Common myeloid progenitor, CD34-positive (primary cell): ENCODE measurements at regions of chr20 and their contacts with region 1.

Region 1: GRCh38 chr20:24781422-24781980 is 167.6 kb upstream of the CST7 start:
- DNase-seq: peak in 1 of 3 donors; percentile 44
- H3K4me3 ChIP-seq: no peak overlapping the region
- H3K27ac ChIP-seq: no peak overlapping the region
- H3K4me1 ChIP-seq: peaks cover 2 to 80% (median 76%) of the 10 kb centered on the region in 4 experiments
- H3K27me3 ChIP-seq: no peaks in the 10 kb centered on the region

Region 2: DNA sequence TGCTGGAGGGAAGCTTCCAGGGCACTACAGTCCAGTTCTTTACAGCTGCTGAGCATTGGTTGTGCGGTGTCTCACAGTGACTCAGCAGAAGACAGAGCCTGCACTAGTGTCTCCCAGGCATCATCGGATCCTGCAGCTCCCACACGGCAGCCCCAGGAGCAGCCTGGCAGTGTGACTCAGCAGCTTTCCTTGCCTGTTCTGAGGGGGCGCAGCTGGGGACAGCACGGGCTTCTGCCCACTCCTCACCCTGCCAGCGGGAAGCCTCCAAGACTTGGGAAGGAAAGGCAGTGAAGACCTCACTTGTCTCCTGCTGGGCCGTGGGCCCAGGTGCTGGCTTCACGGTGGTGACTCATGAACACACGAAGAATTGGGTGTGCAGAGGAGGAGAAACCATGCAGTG is 146.6 kb before region 1 on chr20:
- CTCF ChIA-PET with region 1: interaction called, 10 read pairs
- POLR2A ChIA-PET with region 1: interaction called, 6 read pairs
- DNase-seq: peak; percentile 53 to 88 (median 83)
- H3K4me3 ChIP-seq: peak overlapping the region in 1 of 7 experiments; percentile 19
- H3K27ac ChIP-seq: no peak overlapping the region
- H3K4me1 ChIP-seq: peaks cover 2 to 28% (median 13%) of the 10 kb centered on the region in 4 experiments
- H3K27me3 ChIP-seq: no peaks in the 10 kb centered on the region

Region 3: GRCh38 chr20:24672886-24673677 is 108.4 kb before region 1 on chr20:
- CTCF ChIA-PET with region 1: no interaction called
- POLR2A ChIA-PET with region 1: no interaction called
- DNase-seq: no peak
- H3K4me3 ChIP-seq: no peak overlapping the region
- H3K27ac ChIP-seq: no peak overlapping the region
- H3K4me1 ChIP-seq: no peaks in the 10 kb centered on the region
- H3K27me3 ChIP-seq: no peaks in the 10 kb centered on the region

Region 4: DNA sequence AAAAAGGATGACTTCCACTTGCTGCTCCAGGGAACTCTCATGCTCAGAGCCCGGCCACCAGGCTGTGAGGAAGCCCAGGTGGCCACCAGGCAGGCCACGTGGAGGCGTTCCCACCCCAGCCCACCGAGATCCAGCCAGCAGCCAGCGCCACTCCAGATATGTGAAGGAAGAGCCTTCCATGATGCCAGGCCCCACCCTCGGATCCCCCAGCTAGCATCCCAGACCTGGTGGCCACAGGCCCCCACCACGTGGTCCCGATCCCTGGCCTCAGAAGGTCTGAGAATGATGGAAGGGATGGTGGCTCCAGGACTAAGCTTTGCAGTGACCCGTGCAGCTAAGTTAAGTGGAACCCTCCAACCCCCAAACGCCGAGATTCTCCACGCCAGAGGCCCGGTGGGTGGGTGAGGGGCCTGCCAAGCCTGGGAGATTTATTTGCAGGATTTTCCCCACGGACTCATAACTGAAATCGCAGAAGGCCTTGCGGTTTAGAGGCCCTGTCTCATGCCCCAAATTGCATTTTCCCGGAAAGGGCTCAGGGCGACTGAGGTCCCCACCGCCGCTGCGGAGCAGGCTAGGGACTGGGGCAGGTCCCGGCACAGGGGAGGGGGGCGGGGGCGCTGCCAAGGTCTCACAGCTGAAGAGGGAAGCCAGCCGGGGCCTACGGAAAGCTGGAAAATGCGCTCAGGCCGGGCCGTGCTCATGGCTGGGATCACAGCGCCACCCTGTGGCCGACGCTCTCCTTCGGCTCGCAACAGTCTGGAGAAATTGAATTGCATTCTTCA is 136.5 kb after region 1 on chr20:
- CTCF ChIA-PET with region 1: interaction called, 15 read pairs
- POLR2A ChIA-PET with region 1: interaction called, 3 read pairs
- DNase-seq: peak; percentile 66 to 81 (median 79)
- H3K4me3 ChIP-seq: peak overlapping the region in 1 of 7 experiments; percentile 25
- H3K27ac ChIP-seq: no peak overlapping the region
- H3K4me1 ChIP-seq: peaks cover 0 to 13% (median 10%) of the 10 kb centered on the region in 4 experiments
- H3K27me3 ChIP-seq: no peaks in the 10 kb centered on the region

Region 5: GRCh38 chr20:25269594-25270091 is 488.1 kb after region 1 on chr20:
- CTCF ChIA-PET with region 1: no interaction called
- POLR2A ChIA-PET with region 1: no interaction called
- DNase-seq: no peak
- H3K4me3 ChIP-seq: no peak overlapping the region
- H3K27ac ChIP-seq: no peak overlapping the region
- H3K4me1 ChIP-seq: no peaks in the 10 kb centered on the region
- H3K27me3 ChIP-seq: no peaks in the 10 kb centered on the region